ENCODE measurements at regions of chr13 and their contacts with region 1.

Region 1: GRCh38 chr13:64688893-64689677 is 2541.1 kb downstream of the PCDH9 start:
- DNase-seq: peak; percentile 81
- ATAC-seq: peak; percentile 87
- H3K4me3 ChIP-seq: no peak overlapping the region
- H3K27ac ChIP-seq: no peak overlapping the region
- H3K4me1 ChIP-seq: peaks cover 3% of the 10 kb centered on the region; the same call in 1 of the 2 replicates
- H3K27me3 ChIP-seq: no peaks in the 10 kb centered on the region
- CTCF ChIP-seq: no peak
- POLR2A ChIP-seq: no peak
- RAD21 ChIP-seq: no peak

Region 2: GRCh38 chr13:64314331-64314730 is 374.8 kb before region 1 on chr13:
- CTCF ChIA-PET with region 1: no interaction called
- POLR2A ChIA-PET with region 1: no interaction called
- dilution Hi-C with region 1: no loop called
- in situ Hi-C with region 1: no loop called
- intact Hi-C with region 1: no loop called
- DNase-seq: peak; percentile 61
- ATAC-seq: no peak
- H3K4me3 ChIP-seq: no peak overlapping the region
- H3K27ac ChIP-seq: no peak overlapping the region
- H3K4me1 ChIP-seq: no peaks in the 10 kb centered on the region
- H3K27me3 ChIP-seq: no peaks in the 10 kb centered on the region
- CTCF ChIP-seq: no peak
- POLR2A ChIP-seq: no peak
- RAD21 ChIP-seq: no peak

Region 3: GRCh38 chr13:64723724-64724123 is 34.6 kb after region 1 on chr13:
- CTCF ChIA-PET with region 1: interaction called, 3 read pairs
- POLR2A ChIA-PET with region 1: no interaction called
- dilution Hi-C with region 1: no loop called
- in situ Hi-C with region 1: no loop called
- intact Hi-C with region 1: loop called (anchors 2 kb)
- DNase-seq: peak; percentile 94
- ATAC-seq: peak; percentile 100
- H3K4me3 ChIP-seq: no peak overlapping the region
- H3K27ac ChIP-seq: no peak overlapping the region
- H3K4me1 ChIP-seq: no peaks in the 10 kb centered on the region
- H3K27me3 ChIP-seq: no peaks in the 10 kb centered on the region
- CTCF ChIP-seq: no peak
- POLR2A ChIP-seq: no peak
- RAD21 ChIP-seq: no peak

Region 4: DNA sequence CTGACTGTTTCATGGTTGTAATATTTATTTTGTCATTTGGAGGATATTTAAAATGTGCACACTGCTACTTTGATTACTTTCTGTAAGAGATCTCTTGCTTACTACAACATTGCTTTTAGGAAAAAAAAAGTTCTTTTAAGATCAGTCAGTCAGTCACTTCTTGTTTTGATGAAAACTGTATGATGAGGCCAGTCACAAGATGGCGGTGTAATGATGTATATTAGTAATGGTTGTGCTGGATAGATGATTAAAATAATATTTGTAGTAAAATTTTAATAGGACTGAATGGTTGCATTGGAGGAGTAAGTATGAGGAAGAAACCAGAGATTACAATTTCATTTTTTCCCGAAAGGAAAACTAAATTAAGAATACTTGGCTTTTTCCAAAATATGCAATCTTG is 130.0 kb after region 1 on chr13:
- CTCF ChIA-PET with region 1: no interaction called
- POLR2A ChIA-PET with region 1: no interaction called
- dilution Hi-C with region 1: no loop called
- in situ Hi-C with region 1: no loop called
- intact Hi-C with region 1: no loop called
- DNase-seq: peak; percentile 5
- ATAC-seq: no peak
- H3K4me3 ChIP-seq: no peak overlapping the region
- H3K27ac ChIP-seq: no peak overlapping the region
- H3K4me1 ChIP-seq: peaks cover 2% of the 10 kb centered on the region; the same call in 1 of the 2 replicates
- H3K27me3 ChIP-seq: no peaks in the 10 kb centered on the region
- CTCF ChIP-seq: no peak
- POLR2A ChIP-seq: no peak
- RAD21 ChIP-seq: no peak

Measured in IMR-90 (cell line).